ENCODE measurements at regions of chr7 and their contacts with region 1.

Region 1: DNA sequence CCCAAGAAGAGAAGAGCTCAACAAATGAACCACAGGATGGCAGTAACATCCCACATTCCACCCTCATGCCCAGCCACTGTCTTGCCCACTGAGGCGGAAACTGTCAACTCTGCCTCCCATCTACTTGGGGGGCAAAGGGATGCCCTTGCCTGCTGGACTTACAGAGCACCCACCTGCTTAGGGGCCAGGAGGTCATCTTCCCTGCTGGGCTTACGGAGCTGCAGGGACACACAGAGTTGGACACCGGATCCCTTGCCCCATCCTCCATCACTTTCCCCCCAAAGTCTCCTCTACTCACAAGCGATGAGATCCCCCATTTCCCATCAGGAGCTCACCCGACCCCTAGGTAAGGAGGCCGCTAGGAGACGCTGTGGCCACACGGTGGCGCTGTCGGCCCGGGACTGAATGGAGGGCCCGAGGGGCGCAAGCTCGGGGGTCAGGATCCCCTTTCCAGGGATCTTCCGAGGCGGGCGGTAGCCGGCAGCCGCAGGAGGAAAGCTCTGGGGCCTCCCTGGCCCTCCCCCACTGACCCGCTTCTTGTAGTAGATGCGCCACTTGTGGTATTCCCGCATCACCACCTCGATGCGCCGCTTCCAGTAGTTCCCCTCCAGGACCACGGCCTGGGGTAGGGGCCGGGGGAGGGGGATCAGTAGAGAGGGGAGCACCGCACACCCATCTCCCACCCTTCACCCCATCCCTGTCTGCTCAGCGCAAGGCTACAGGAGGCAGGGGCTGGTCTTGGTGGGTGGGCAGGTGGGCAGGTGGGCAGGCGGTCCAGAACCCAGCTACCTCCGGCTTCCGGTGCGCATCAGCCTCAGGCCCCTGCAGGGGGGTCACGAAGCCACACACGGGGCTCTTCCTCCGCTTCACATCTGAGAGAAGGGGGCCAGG is 17.3 kb downstream of the MLXIPL start:
- DNase-seq: peak; percentile 48
- H3K4me3 ChIP-seq: no peak overlapping the region
- H3K27ac ChIP-seq: no peak overlapping the region
- H3K4me1 ChIP-seq: peaks cover 0 to 4% (median 0%) of the 10 kb centered on the region in 4 donors
- H3K27me3 ChIP-seq: peaks cover 26% of the 10 kb centered on the region
- CTCF ChIP-seq: peak; percentile 89 to 99 (median 94)
- EP300 ChIP-seq: no peak
- POLR2A ChIP-seq: no peak

Region 2: GRCh38 chr7:73667344-73668102 is 60.5 kb after region 1 on chr7 and contains the start of gene VPS37D:
- in situ Hi-C with region 1: no loop called
- intact Hi-C with region 1: loop called (anchors 10 kb)
- DNase-seq: peak; percentile 94
- H3K4me3 ChIP-seq: peak within 1 kb of the TSS; percentile 61 to 67 (median 65)
- H3K27ac ChIP-seq: no peak within 1 kb of the TSS
- H3K4me1 ChIP-seq: peaks cover 3 to 31% (median 20%) of the 10 kb centered on the region in 4 donors
- H3K27me3 ChIP-seq: peaks cover 14% of the 10 kb centered on the region
- CTCF ChIP-seq: peak in 4 of 5 experiments; percentile 51 to 90 (median 72)
- EP300 ChIP-seq: no peak
- POLR2A ChIP-seq: no peak
- total RNA-seq, gene VPS37D: 0.82 to 3.5 TPM in 2 of 4 donors, not detected in the others

Region 3: GRCh38 chr7:73718905-73719805 is 112.1 kb after region 1 on chr7 and contains the start of gene STX1A:
- in situ Hi-C with region 1: loop called in 3 of 4 experiments (anchors 5 to 10 kb)
- intact Hi-C with region 1: loop called (anchors 2 kb)
- DNase-seq: peak; percentile 76
- H3K4me3 ChIP-seq: peak within 1 kb of the TSS; percentile 75 to 94 (median 90)
- H3K27ac ChIP-seq: peak within 1 kb of the TSS; percentile 68 to 77 (median 76)
- H3K4me1 ChIP-seq: peaks cover 21 to 61% (median 47%) of the 10 kb centered on the region in 4 donors
- H3K27me3 ChIP-seq: peaks cover 9% of the 10 kb centered on the region
- CTCF ChIP-seq: no peak
- EP300 ChIP-seq: no peak
- POLR2A ChIP-seq: no peak
- total RNA-seq, gene STX1A: 4.1 to 6.0 (median 5.0) TPM

Region 4: DNA sequence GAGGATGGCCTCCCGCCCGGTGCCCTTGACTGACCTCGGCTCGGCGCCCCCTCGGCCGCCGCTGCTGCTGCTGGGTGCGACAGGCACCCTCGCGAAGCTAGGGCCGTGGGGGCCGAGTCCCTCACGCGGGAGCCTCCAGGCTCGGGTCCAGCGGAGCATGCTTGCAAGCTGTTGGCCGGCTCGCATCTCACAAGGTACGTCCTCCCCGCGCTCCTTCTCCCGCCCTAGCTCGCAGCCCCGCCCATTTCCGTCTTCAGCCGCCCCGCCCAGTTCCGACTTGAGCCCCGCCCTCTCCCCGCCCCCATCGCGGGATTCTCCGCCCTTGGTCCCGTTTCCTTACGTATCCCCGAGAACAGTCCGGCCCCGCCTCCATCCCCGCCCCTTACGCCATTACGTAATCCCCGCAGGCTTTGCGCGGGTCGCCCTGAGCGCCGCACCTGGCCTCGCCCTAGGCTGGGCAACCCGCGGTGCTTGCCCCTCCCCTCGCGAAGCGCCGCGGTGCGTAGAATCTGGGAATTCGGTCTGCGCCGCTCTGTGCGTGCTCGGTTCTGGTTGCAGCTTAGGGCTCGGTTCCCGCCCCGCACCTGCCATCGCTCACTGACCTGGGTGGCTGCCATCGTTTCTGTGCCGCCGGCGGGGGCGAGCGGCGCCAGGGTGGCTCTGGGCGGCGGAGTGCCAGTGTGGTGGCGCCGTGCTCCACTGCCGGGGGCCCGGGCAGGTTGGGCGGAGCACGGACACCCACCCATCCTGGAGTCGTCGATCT is 131.7 kb after region 1 on chr7 and contains the start of gene ABHD11:
- in situ Hi-C with region 1: loop called in 1 of 4 experiments (anchors 5 kb)
- intact Hi-C with region 1: no loop called
- DNase-seq: peak; percentile 100
- H3K4me3 ChIP-seq: peak within 1 kb of the TSS; percentile 65 to 95 (median 86)
- H3K27ac ChIP-seq: peak within 1 kb of the TSS; percentile 92 to 98 (median 96)
- H3K4me1 ChIP-seq: peaks cover 14 to 67% (median 52%) of the 10 kb centered on the region in 4 donors
- H3K27me3 ChIP-seq: no peaks in the 10 kb centered on the region
- CTCF ChIP-seq: no peak
- EP300 ChIP-seq: peak; percentile 22
- POLR2A ChIP-seq: peak; percentile 95
- total RNA-seq, gene ABHD11: 108 to 177 (median 117) TPM

Region 5: GRCh38 chr7:73769992-73770859 is 163.2 kb after region 1 on chr7 and contains the start of gene CLDN3:
- in situ Hi-C with region 1: no loop called
- intact Hi-C with region 1: no loop called
- DNase-seq: peak; percentile 94
- H3K4me3 ChIP-seq: peak within 1 kb of the TSS; percentile 24 to 58 (median 56)
- H3K27ac ChIP-seq: peak within 1 kb of the TSS; percentile 87 to 91 (median 88)
- H3K4me1 ChIP-seq: peaks cover 0 to 36% (median 34%) of the 10 kb centered on the region in 4 donors
- H3K27me3 ChIP-seq: peaks cover 41% of the 10 kb centered on the region
- CTCF ChIP-seq: no peak
- EP300 ChIP-seq: no peak
- POLR2A ChIP-seq: peak; percentile 97
- total RNA-seq, gene CLDN3: 672 to 1,662 (median 1,512) TPM

Measured in transverse colon (tissue), 4 donors.